A673 (cell line): ENCODE measurements at regions of chr12 and their contacts with region 1.

Region 1: GRCh38 chr12:45122768-45123380 is 72.0 kb upstream of the DBX2 start:
- DNase-seq: peak; percentile 84
- H3K4me3 ChIP-seq: no peak overlapping the region
- H3K27ac ChIP-seq: no peak overlapping the region
- H3K4me1 ChIP-seq: peaks cover 5% of the 10 kb centered on the region
- H3K27me3 ChIP-seq: no peaks in the 10 kb centered on the region
- CTCF ChIP-seq: peak; percentile 90

Region 2: GRCh38 chr12:43957732-43958372 is 1165.0 kb before region 1 on chr12:
- CTCF ChIA-PET with region 1: no interaction called
- POLR2A ChIA-PET with region 1: no interaction called
- intact Hi-C with region 1: loop called (anchors 2 kb)
- DNase-seq: peak; percentile 93
- H3K4me3 ChIP-seq: no peak overlapping the region
- H3K27ac ChIP-seq: peak overlapping the region; percentile 72
- H3K4me1 ChIP-seq: peaks cover 24% of the 10 kb centered on the region
- H3K27me3 ChIP-seq: no peaks in the 10 kb centered on the region
- CTCF ChIP-seq: peak; percentile 71

Region 3: GRCh38 chr12:44947163-44947562 is 175.7 kb before region 1 on chr12:
- CTCF ChIA-PET with region 1: interaction called, 14 read pairs
- POLR2A ChIA-PET with region 1: no interaction called
- intact Hi-C with region 1: loop called (anchors 2 kb)
- DNase-seq: no peak
- H3K4me3 ChIP-seq: no peak overlapping the region
- H3K27ac ChIP-seq: no peak overlapping the region
- H3K4me1 ChIP-seq: no peaks in the 10 kb centered on the region
- H3K27me3 ChIP-seq: no peaks in the 10 kb centered on the region
- CTCF ChIP-seq: no peak

Region 4: DNA sequence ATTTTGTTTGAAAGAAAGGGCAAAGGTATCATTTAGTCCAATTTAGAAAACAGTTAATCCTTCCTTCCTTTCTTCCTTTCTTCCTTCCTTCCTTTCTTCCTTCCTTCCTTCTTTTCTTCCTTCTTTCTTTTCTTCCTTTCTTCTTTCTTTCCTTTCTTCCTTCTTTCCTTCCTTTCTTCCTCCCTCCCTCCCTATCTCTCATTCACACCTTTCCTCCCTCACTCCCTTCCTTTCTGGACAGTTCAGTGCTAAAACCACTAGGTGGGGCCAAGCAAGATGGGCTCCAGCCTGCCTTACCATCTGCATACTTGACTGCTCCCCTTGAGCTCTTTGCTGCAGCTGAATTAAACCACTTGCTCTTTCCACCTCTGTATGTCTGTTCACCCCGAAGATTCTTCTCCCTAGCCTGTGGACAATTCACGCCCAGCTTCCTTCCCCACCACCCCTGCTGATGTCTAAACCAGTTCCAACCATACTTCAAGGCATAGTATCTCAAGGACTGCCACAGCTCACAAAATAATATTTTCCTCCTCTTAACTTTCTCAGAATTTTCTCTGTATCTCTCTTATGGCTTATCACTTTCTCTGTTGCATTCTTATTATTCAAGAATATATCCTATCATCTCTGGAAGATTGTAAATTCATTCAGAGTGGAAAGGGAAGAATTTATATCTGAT is 150.0 kb before region 1 on chr12:
- CTCF ChIA-PET with region 1: interaction called, 12 read pairs
- POLR2A ChIA-PET with region 1: no interaction called
- intact Hi-C with region 1: loop called (anchors 2 kb)
- DNase-seq: peak; percentile 67
- H3K4me3 ChIP-seq: no peak overlapping the region
- H3K27ac ChIP-seq: no peak overlapping the region
- H3K4me1 ChIP-seq: no peaks in the 10 kb centered on the region
- H3K27me3 ChIP-seq: no peaks in the 10 kb centered on the region
- CTCF ChIP-seq: peak; percentile 89

Region 5: GRCh38 chr12:45010059-45010458 is 112.8 kb before region 1 on chr12:
- CTCF ChIA-PET with region 1: no interaction called
- POLR2A ChIA-PET with region 1: interaction called, 15 read pairs
- intact Hi-C with region 1: no loop called
- DNase-seq: no peak
- H3K4me3 ChIP-seq: no peak overlapping the region
- H3K27ac ChIP-seq: no peak overlapping the region
- H3K4me1 ChIP-seq: peaks cover 14% of the 10 kb centered on the region
- H3K27me3 ChIP-seq: no peaks in the 10 kb centered on the region
- CTCF ChIP-seq: no peak

Region 6: GRCh38 chr12:45220363-45220931 is 97.6 kb after region 1 on chr12:
- CTCF ChIA-PET with region 1: no interaction called
- POLR2A ChIA-PET with region 1: no interaction called
- intact Hi-C with region 1: no loop called
- DNase-seq: no peak
- H3K4me3 ChIP-seq: no peak overlapping the region
- H3K27ac ChIP-seq: no peak overlapping the region
- H3K4me1 ChIP-seq: peaks cover 58% of the 10 kb centered on the region
- H3K27me3 ChIP-seq: no peaks in the 10 kb centered on the region
- CTCF ChIP-seq: no peak